CD4-positive, alpha-beta memory T cell (primary cell): ENCODE measurements at regions of chr17 and their contacts with region 1.

Region 1: GRCh38 chr17:45828628-45829027 is 16.1 kb upstream of the SPPL2C start:
- DNase-seq: no peak
- H3K4me3 ChIP-seq: no peak overlapping the region
- H3K4me3 Mint-ChIP-seq: peak overlapping the region in 1 of 8 donors; percentile 33
- H3K27ac ChIP-seq: no peak overlapping the region
- H3K27ac Mint-ChIP-seq: no peak overlapping the region
- H3K4me1 ChIP-seq: peaks cover 4% of the 10 kb centered on the region
- H3K4me1 Mint-ChIP-seq: peaks cover 0 to 15% (median under 1%) of the 10 kb centered on the region in 4 donors
- H3K27me3 ChIP-seq: no peaks in the 10 kb centered on the region
- H3K27me3 Mint-ChIP-seq: peaks cover 1 to 4% of the 10 kb centered on the region in 2 donors

Region 2: DNA sequence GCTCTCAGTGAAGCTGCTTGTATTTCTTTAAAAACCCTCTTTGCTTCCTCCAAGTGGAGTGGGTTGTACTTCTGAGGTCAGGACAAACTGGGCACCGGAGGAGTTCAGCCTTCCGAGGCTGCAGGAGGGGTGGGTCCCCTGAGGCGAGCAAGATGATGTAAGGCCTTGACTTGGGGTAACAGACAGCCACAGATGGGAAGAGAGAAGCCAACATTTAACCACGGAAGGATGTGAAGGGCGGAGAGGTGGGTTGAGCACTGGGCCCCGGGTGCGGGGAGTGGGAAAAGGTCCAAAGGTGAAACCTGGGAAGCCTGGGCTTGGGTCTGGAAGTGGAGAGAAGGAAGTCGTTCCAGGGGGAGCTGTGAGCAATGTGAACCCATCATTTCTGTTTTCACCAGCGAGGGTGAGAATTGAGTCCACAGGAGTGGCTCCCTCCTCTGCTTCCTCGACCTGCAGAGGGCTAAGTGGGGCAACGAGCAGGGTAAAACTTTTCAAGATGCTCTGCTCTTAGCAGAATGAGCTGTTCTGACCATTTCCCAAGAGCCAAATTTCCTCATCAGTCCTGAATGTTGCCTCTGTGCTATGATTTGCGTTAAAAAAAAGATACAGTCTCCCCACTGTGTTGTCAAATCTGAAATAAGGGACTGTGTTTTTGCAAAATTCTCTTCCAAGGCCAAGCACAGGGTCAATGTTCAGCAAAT is 182.2 kb before region 1 on chr17:
- CTCF ChIA-PET with region 1: interaction called, 149 read pairs
- POLR2A ChIA-PET with region 1: no interaction called
- intact Hi-C with region 1: no loop called
- DNase-seq: no peak
- H3K4me3 ChIP-seq: no peak overlapping the region
- H3K4me3 Mint-ChIP-seq: peak overlapping the region in 2 of 8 donors; percentile 47 to 60
- H3K27ac ChIP-seq: no peak overlapping the region
- H3K27ac Mint-ChIP-seq: peak overlapping the region in 1 of 7 donors; percentile 0
- H3K4me1 ChIP-seq: peaks cover 8% of the 10 kb centered on the region
- H3K4me1 Mint-ChIP-seq: peaks cover 4 to 19% (median 11%) of the 10 kb centered on the region in 4 donors
- H3K27me3 ChIP-seq: no peaks in the 10 kb centered on the region
- H3K27me3 Mint-ChIP-seq: peaks cover 0 to 2% of the 10 kb centered on the region in 2 donors